Naive thymus-derived CD4-positive, alpha-beta T cell (primary cell): ENCODE measurements at regions of chr3 and their contacts with region 1.

Region 1: GRCh38 chr3:56753206-56753820 is 48.4 kb downstream of the ARHGEF3 start:
- DNase-seq: peak in 1 of 9 donors; percentile 31
- ATAC-seq: peak; percentile 74
- H3K4me3 ChIP-seq: no peak overlapping the region
- H3K4me3 Mint-ChIP-seq: peak overlapping the region in 7 of 10 donors; percentile 2 to 97 (median 90)
- H3K27ac ChIP-seq: peak overlapping the region; percentile 28
- H3K27ac Mint-ChIP-seq: peak overlapping the region; percentile 59 to 100 (median 80)
- H3K4me1 ChIP-seq: peaks cover 39 to 40% of the 10 kb centered on the region in 2 donors
- H3K4me1 Mint-ChIP-seq: peaks cover 41 to 80% (median 67%) of the 10 kb centered on the region in 7 donors
- H3K27me3 ChIP-seq: no peaks in the 10 kb centered on the region
- H3K27me3 Mint-ChIP-seq: no peaks in the 10 kb centered on the region

Region 2: GRCh38 chr3:56711344-56711743 is 42.0 kb before region 1 on chr3:
- CTCF ChIA-PET with region 1: interaction called, 3 read pairs
- POLR2A ChIA-PET with region 1: interaction called, 3 read pairs
- intact Hi-C with region 1: loop called in 1 of 2 experiments (anchors 5 kb)
- DNase-seq: no peak
- ATAC-seq: no peak
- H3K4me3 ChIP-seq: no peak overlapping the region
- H3K4me3 Mint-ChIP-seq: no peak overlapping the region
- H3K27ac ChIP-seq: no peak overlapping the region
- H3K27ac Mint-ChIP-seq: peak overlapping the region in 4 of 9 donors; percentile 22 to 69 (median 40)
- H3K4me1 ChIP-seq: no peaks in the 10 kb centered on the region
- H3K4me1 Mint-ChIP-seq: peaks cover 0 to 9% (median 0%) of the 10 kb centered on the region in 7 donors
- H3K27me3 ChIP-seq: no peaks in the 10 kb centered on the region
- H3K27me3 Mint-ChIP-seq: no peaks in the 10 kb centered on the region

Region 3: DNA sequence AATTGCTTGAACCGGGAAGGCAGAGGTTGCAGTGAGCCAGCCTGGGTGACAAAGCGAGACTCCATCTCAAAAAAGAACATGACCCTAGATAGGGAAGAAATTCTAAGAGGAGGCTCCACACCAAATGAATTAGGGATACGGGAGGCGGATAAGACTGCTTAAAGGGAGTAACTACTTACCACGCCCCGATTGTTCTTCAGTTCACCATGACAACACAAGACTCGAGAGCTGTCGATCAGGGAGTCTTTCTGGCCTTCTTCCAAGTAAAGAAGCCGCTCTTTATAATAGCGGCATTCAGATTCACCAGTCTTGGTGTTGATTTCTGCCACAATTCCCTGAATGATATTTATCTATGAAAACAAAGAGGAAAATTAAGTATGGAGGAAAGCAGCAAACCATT is 16.3 kb before region 1 on chr3:
- CTCF ChIA-PET with region 1: interaction called, 3 read pairs
- POLR2A ChIA-PET with region 1: interaction called, 6 read pairs
- intact Hi-C with region 1: loop called (anchors 2 kb)
- DNase-seq: no peak
- ATAC-seq: no peak
- H3K4me3 ChIP-seq: no peak overlapping the region
- H3K4me3 Mint-ChIP-seq: no peak overlapping the region
- H3K27ac ChIP-seq: no peak overlapping the region
- H3K27ac Mint-ChIP-seq: peak overlapping the region in 5 of 9 donors; percentile 6 to 89 (median 69)
- H3K4me1 ChIP-seq: peaks cover 11 to 28% of the 10 kb centered on the region in 2 donors
- H3K4me1 Mint-ChIP-seq: peaks cover 11 to 46% (median 37%) of the 10 kb centered on the region in 7 donors
- H3K27me3 ChIP-seq: no peaks in the 10 kb centered on the region
- H3K27me3 Mint-ChIP-seq: no peaks in the 10 kb centered on the region

Region 4: GRCh38 chr3:56783644-56784447 is 30.5 kb after region 1 on chr3:
- CTCF ChIA-PET with region 1: interaction called, 7 read pairs
- POLR2A ChIA-PET with region 1: interaction called, 41 read pairs
- intact Hi-C with region 1: loop called (anchors 1 kb)
- DNase-seq: peak in 8 of 9 donors; percentile 63 to 86 (median 78)
- ATAC-seq: peak; percentile 95
- H3K4me3 ChIP-seq: peak overlapping the region; percentile 31
- H3K4me3 Mint-ChIP-seq: peak overlapping the region; percentile 38 to 85 (median 78)
- H3K27ac ChIP-seq: peak overlapping the region; percentile 63
- H3K27ac Mint-ChIP-seq: peak overlapping the region; percentile 76 to 98 (median 96)
- H3K4me1 ChIP-seq: peaks cover 94 to 96% of the 10 kb centered on the region in 2 donors
- H3K4me1 Mint-ChIP-seq: peaks cover 76 to 100% (median 98%) of the 10 kb centered on the region in 7 donors
- H3K27me3 ChIP-seq: no peaks in the 10 kb centered on the region
- H3K27me3 Mint-ChIP-seq: peaks cover 0 to 2% (median 0%) of the 10 kb centered on the region in 5 donors